Activated CD4-positive, alpha-beta T cell treated with anti-CD3 and anti-CD28 coated beads, Interleukin-2, amount 10 ng/mL, durations not matched to agents 24 days and 14 days (primary cell): ENCODE measurements at regions of chr1 and their contacts with region 1.

Region 1: GRCh38 chr1:243255791-243256512 is at the start of gene SDCCAG8:
- DNase-seq: peak; percentile 98
- H3K4me3 Mint-ChIP-seq: peak within 1 kb of the TSS; percentile 89
- H3K27ac Mint-ChIP-seq: peak within 1 kb of the TSS; percentile 100
- H3K4me1 Mint-ChIP-seq: peaks cover 36% of the 10 kb centered on the region
- H3K27me3 Mint-ChIP-seq: no peaks in the 10 kb centered on the region
- total RNA-seq, gene SDCCAG8: 16.5 and 23.6 TPM in 2 replicates

Region 2: DNA sequence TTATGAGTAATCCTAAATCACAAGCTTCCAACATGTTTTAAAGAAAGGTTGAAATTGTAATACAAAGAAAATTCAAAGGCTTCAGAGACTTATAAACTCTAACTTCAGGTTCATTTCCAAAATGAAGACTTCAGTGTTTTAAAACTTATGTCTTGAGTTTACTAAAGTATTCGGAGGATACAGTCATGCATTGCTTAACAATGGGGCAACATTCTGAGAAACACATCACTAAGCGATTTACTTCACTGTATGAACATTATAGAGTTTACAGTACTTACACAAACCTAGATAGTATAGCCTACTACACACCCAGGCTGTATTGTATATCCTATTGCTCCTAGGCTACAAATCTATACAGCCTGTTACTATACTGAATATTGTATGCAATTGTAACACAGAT is 39.2 kb before region 1 on chr1:
- intact Hi-C with region 1: loop called (anchors 5 kb)
- DNase-seq: no peak
- H3K4me3 Mint-ChIP-seq: no peak overlapping the region
- H3K27ac Mint-ChIP-seq: no peak overlapping the region
- H3K4me1 Mint-ChIP-seq: no peaks in the 10 kb centered on the region
- H3K27me3 Mint-ChIP-seq: no peaks in the 10 kb centered on the region

Region 3: GRCh38 chr1:243325305-243325890 is 69.4 kb after region 1 on chr1:
- intact Hi-C with region 1: loop called (anchors 2 kb)
- DNase-seq: peak; percentile 80
- H3K4me3 Mint-ChIP-seq: no peak overlapping the region
- H3K27ac Mint-ChIP-seq: no peak overlapping the region
- H3K4me1 Mint-ChIP-seq: no peaks in the 10 kb centered on the region
- H3K27me3 Mint-ChIP-seq: no peaks in the 10 kb centered on the region

Region 4: DNA sequence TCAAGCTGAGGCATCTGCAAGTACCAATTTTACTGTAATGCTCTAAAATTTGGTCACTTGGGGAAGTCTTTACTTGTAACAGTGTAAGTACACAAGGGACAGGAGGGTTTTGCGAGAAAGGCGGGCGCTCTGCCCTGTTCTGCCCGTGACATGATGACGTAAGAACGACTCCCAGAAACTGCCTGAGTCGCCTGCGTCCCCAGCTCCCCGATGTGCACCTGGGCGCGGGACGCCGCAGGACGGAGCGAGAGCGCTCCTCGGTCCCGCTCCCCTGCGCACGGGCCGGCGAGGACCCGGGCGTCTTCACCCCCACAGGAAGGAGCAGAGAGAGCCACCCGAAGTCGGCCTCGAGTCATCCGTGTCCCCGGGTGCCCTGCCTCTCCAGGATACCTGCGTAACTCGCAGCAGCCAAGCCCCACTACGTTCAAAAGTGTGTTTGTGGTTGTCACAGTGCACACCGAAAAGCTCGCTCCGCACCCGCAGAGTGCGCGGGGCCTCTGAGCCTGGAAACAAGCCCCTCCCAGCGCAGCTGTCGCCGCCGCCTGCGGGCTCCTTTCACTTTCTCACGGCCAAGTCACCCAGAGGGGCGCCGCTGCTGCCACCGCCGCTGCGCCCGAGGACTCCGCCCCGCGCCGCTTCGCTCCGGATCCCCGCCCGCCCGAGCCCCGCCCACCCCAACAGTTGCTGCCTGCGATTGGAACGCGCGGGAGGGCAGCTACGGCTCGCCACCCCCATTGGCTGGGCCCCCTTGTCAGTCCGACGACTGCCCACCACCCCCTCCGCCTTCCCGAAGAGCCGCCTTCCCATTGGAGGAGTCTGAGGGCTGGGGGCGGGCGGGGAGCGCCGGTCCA is 791.9 kb after region 1 on chr1:
- intact Hi-C with region 1: loop called (anchors 2 kb)
- DNase-seq: peak; percentile 97
- H3K4me3 Mint-ChIP-seq: peak overlapping the region; percentile 97
- H3K27ac Mint-ChIP-seq: peak overlapping the region; percentile 95
- H3K4me1 Mint-ChIP-seq: peaks cover 28% of the 10 kb centered on the region
- H3K27me3 Mint-ChIP-seq: peaks cover 47% of the 10 kb centered on the region

Region 5: DNA sequence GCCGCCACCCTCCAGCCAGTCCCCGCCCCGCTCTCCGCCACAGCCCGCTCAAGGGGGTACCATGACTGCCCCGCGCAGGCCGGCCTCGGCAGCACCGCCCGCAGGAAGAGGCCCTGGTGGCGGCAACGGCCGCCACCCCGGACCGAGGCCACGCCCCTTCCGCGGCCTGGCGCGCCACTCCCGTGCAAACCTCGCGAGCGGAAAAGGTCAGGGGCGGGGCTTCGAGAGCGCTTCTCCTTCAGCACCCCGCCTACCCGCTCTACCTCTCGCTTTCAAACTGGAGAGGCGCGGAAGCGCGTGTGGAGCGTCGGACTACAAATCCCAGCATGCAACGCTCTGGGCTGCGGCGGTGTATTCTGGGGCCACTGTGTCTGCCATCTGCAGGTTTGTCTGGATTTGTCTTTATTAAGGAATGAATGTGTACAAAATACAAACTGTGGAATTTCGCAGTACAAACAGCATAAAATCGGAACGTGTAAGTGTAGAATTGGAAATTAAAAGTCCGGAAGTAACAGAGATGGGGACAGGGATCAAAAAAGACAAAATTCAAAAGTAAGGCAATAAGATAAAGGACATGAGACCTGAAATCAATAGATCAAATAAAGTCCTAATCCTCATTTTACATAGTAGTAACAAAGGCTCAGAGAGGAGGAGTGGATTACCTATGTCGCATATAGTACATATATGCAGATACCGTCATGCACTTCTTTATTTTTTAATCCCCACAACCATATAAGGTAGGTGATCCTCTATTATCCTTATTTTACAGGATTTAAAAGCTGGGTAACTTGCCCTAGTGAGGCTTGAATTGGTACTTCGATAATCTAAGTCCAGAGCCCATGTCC is 1196.2 kb after region 1 on chr1:
- intact Hi-C with region 1: loop called (anchors 1 kb)
- DNase-seq: peak; percentile 100
- H3K4me3 Mint-ChIP-seq: peak overlapping the region; percentile 92
- H3K27ac Mint-ChIP-seq: peak overlapping the region; percentile 96
- H3K4me1 Mint-ChIP-seq: peaks cover 29% of the 10 kb centered on the region
- H3K27me3 Mint-ChIP-seq: no peaks in the 10 kb centered on the region

Region 6: DNA sequence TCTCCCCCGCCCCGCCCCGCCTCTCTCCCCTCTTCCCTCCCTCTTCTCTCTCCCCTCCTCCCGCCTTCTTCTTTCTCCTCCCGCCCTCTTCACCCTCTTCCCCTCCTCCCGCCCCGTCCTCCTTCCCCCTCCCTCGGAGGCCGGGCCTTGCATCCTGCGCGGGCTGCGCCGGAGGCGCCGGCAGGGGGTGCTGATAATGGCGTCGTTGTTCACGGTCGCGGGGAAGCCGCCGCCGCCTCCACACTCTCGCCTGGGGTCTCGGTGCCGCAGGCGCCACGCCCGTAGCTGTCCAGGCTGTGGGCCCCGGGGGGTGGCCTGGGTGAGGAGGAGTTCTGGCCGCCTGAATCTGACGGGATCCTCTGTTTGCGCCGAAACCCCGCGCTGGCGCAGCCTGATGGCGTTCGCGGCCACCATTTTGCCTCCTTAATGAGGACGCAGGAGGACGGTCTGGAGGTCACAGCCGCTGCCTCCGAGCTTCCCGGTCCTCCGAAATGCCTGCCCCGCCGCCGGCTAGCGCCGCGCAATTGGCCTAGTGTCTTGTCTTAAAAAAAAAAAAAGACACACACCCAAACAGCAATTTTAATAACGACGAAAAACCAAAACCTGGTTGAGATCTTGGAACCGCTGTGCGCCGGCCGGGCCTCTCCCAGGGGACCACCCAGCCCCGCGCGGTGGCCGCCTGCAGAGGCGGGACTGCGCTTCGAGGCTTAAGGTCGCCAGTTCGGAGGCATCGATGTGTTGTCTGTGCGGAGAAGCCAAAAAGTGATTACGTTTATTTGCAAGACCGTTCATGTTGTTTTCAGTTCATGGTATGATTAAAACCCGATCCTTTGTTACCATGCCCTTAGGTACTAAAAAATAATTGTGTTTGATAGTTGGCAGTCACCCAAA is 1715.0 kb after region 1 on chr1:
- intact Hi-C with region 1: loop called (anchors 2 kb)
- DNase-seq: peak; percentile 97
- H3K4me3 Mint-ChIP-seq: peak overlapping the region; percentile 94
- H3K27ac Mint-ChIP-seq: peak overlapping the region; percentile 99
- H3K4me1 Mint-ChIP-seq: peaks cover 17% of the 10 kb centered on the region
- H3K27me3 Mint-ChIP-seq: peaks cover 3% of the 10 kb centered on the region